H1 (cell line): ENCODE measurements at regions of chr4 and their contacts with region 1.

Region 1: GRCh38 chr4:5460116-5460801 is 248.1 kb downstream of the EVC2 start:
- DNase-seq: peak; percentile 38 to 74
- H3K4me3 ChIP-seq: no peak overlapping the region
- H3K27ac ChIP-seq: no peak overlapping the region
- H3K4me1 ChIP-seq: no peaks in the 10 kb centered on the region
- H3K27me3 ChIP-seq: no peaks in the 10 kb centered on the region
- CTCF ChIP-seq: peak in 2 of 3 experiments; percentile 89 to 92; a peak in 3 of 4 replicates
- EP300 ChIP-seq: no peak
- POLR2A ChIP-seq: no peak
- RAD21 ChIP-seq: peak; percentile 64 to 87

Region 2: DNA sequence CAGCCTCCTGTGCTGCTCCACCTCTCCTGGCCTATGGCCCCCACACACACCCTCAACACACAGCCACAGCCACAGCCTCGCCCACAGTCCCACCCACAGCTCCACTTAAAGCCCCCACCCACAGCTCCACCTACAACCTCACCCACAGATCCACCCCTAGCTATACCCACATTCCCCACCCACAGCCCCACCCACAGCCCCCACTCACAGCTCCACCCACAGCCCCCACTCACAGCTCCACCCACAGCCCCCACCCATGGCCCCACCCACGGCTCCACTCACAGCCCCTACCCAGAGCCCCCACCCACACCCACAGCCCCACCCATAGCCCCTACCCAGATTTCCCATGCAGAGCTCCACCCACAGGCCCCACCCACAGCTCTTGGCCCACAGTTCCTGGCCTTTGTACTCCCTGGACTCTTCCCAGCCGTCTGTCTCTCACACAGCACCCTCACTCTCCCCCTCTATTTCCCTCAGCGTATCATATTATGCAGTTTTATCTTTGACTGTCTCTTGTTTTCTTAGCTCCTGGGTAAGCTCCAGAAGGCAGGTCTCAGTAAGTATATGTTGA is 74.4 kb before region 1 on chr4:
- CTCF ChIA-PET with region 1: interaction called, 14 read pairs
- POLR2A ChIA-PET with region 1: no interaction called
- DNase-seq: no peak
- H3K4me3 ChIP-seq: no peak overlapping the region
- H3K27ac ChIP-seq: no peak overlapping the region
- H3K4me1 ChIP-seq: no peaks in the 10 kb centered on the region
- H3K27me3 ChIP-seq: no peaks in the 10 kb centered on the region
- CTCF ChIP-seq: no peak
- EP300 ChIP-seq: no peak
- POLR2A ChIP-seq: no peak
- RAD21 ChIP-seq: no peak

Region 3: GRCh38 chr4:5409972-5410618 is 50.2 kb before region 1 on chr4:
- CTCF ChIA-PET with region 1: interaction called, 31 read pairs
- POLR2A ChIA-PET with region 1: no interaction called
- DNase-seq: no peak
- H3K4me3 ChIP-seq: no peak overlapping the region
- H3K27ac ChIP-seq: no peak overlapping the region
- H3K4me1 ChIP-seq: no peaks in the 10 kb centered on the region
- H3K27me3 ChIP-seq: no peaks in the 10 kb centered on the region
- CTCF ChIP-seq: peak; percentile 28 to 44 (median 28)
- EP300 ChIP-seq: no peak
- POLR2A ChIP-seq: no peak
- RAD21 ChIP-seq: peak; percentile 23 to 35; a peak in 3 of 4 replicates

Region 4: GRCh38 chr4:5448221-5448620 is 12.0 kb before region 1 on chr4:
- CTCF ChIA-PET with region 1: interaction called, 40 read pairs
- POLR2A ChIA-PET with region 1: interaction called, 3 read pairs
- DNase-seq: no peak
- H3K4me3 ChIP-seq: no peak overlapping the region
- H3K27ac ChIP-seq: no peak overlapping the region
- H3K4me1 ChIP-seq: no peaks in the 10 kb centered on the region
- H3K27me3 ChIP-seq: no peaks in the 10 kb centered on the region
- CTCF ChIP-seq: no peak
- EP300 ChIP-seq: no peak
- POLR2A ChIP-seq: no peak
- RAD21 ChIP-seq: no peak

Region 5: GRCh38 chr4:5488413-5488812 is 28.2 kb after region 1 on chr4:
- CTCF ChIA-PET with region 1: no interaction called
- POLR2A ChIA-PET with region 1: no interaction called
- DNase-seq: no peak
- H3K4me3 ChIP-seq: no peak overlapping the region
- H3K27ac ChIP-seq: no peak overlapping the region
- H3K4me1 ChIP-seq: no peaks in the 10 kb centered on the region
- H3K27me3 ChIP-seq: no peaks in the 10 kb centered on the region
- CTCF ChIP-seq: no peak
- EP300 ChIP-seq: no peak
- POLR2A ChIP-seq: no peak
- RAD21 ChIP-seq: no peak

Region 6: GRCh38 chr4:5592272-5592671 is 132.0 kb after region 1 on chr4:
- CTCF ChIA-PET with region 1: no interaction called
- POLR2A ChIA-PET with region 1: no interaction called
- DNase-seq: no peak
- H3K4me3 ChIP-seq: peak overlapping the region in 1 of 4 experiments; percentile 3; a peak in 1 of 8 replicates
- H3K27ac ChIP-seq: no peak overlapping the region
- H3K4me1 ChIP-seq: peaks cover 0 to 13% (median 1%) of the 10 kb centered on the region in 4 experiments; a peak in 3 of 7 replicates
- H3K27me3 ChIP-seq: no peaks in the 10 kb centered on the region
- CTCF ChIP-seq: no peak
- EP300 ChIP-seq: no peak
- POLR2A ChIP-seq: no peak
- RAD21 ChIP-seq: no peak